Activated T-helper 1 cell treated with anti-CD3 and anti-CD28 coated beads, Interleukin-12 subunit alpha, Interleukin-12 subunit beta, Interleukin-2, Interleukin-4 antibody, amounts not matched to agents 30 ng/mL and 10 ng/mL and 1 ng/mL, durations not matched to agents 14 hours and 24 hours and 36 hours (primary cell): ENCODE measurements at regions of chr17 and their contacts with region 1.

Region 1: DNA sequence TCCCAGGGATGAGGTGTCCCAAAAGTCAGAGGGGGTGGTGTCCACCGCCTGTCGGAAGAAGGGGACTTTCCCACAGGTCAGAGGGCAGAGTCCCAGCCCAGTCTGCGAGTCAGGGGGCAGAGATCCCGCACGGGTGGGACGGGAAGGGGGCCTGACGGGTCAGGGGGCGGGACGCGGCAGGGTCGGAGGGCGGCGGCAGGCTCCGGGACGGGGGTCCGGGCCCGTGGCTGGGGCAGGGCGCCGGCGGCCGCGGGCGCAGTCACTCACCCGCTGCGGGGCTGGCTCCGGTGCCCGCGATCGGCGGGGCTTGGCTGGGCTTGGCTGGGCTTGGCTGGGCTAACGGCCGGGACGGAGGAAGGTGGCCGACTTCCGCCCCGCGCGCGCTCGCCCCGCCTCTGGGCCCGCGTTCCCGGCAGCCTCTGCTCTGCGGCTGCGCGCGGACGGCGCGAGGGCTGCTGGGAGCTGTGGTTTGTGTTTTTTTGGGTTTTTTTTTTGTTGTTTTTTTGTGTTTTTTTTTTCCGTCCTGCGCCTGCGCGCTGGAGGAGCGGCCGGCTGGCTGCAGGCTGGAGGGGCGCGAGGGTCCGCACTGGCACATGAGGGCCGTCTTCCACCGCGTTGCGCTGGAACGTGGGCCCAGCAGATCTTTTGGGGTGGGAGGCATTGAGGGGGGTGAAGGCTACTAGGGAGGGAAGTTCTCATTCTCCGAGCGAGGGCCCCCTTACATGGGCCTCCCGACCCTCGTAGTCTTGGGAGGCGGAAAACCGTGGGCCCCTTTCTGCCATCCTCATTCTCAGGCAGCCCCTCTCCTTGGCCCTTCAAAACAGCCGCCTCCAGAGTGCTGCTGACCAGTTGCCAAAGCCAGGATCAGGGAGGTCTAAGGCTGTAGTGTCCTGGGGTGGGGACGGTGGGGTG is at the start of gene CANT1:
- DNase-seq: peak; percentile 88
- H3K4me3 Mint-ChIP-seq: peak within 1 kb of the TSS; percentile 91
- H3K27ac Mint-ChIP-seq: peak within 1 kb of the TSS; percentile 93
- H3K4me1 Mint-ChIP-seq: peaks cover 52% of the 10 kb centered on the region
- H3K27me3 Mint-ChIP-seq: peaks cover 8% of the 10 kb centered on the region
- total RNA-seq, gene CANT1: 54.7 and 57.3 TPM in 2 replicates

Region 2: GRCh38 chr17:77465358-77466041 is 1544.2 kb before region 1 on chr17:
- intact Hi-C with region 1: loop called (anchors 5 kb)
- DNase-seq: peak; percentile 72
- H3K4me3 Mint-ChIP-seq: peak overlapping the region; percentile 59
- H3K27ac Mint-ChIP-seq: peak overlapping the region; percentile 89
- H3K4me1 Mint-ChIP-seq: peaks cover 77% of the 10 kb centered on the region
- H3K27me3 Mint-ChIP-seq: no peaks in the 10 kb centered on the region

Region 3: DNA sequence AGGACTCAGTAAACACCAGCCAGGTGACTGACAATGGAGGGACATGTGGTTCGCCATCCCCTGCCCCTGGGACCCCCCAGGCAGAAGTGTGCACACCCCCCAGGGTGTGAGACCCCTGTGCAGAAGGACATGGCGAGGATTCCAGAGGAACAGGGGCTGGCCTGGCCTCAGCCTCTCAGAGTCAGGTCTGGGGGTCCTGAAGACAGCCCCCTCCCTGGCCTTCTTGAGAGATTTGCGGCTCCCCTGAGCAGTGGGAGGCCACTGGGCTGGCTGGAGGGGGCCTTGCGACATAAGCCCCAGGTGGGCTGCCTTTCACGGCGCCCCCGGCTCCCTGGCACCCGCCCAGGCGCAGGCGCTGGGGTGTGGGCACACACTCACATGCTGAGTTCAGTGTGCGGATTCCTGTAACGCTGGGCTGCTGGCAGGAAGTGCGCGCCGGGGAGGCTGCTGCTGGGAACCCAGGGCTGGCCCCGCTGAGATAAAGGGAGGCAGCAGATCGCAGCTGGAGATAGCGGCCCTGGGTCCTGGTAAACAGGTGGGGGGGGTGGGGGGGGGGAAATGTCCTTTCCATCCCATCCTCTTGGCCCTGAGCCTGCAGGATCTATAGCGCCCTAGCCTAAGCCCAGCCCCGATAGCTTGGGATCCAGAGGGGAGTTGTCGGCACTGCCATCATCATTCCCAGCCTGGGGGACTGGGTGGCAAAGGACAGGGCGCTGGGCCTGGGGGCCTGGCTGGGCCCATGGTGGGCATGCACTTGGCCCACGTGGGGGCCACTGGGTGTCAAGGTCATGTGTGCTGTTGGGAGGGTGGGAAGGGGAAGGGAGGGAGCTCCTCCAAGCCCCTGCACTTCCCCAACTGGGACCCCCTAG is 751.1 kb before region 1 on chr17:
- intact Hi-C with region 1: loop called (anchors 5 kb)
- DNase-seq: peak; percentile 76
- H3K4me3 Mint-ChIP-seq: peak overlapping the region; percentile 80
- H3K27ac Mint-ChIP-seq: peak overlapping the region; percentile 95
- H3K4me1 Mint-ChIP-seq: peaks cover 75% of the 10 kb centered on the region
- H3K27me3 Mint-ChIP-seq: no peaks in the 10 kb centered on the region

Region 4: GRCh38 chr17:79074650-79075445 is 65.2 kb after region 1 on chr17 and contains the start of gene ENGASE:
- intact Hi-C with region 1: loop called (anchors 5 kb)
- DNase-seq: peak; percentile 93
- H3K4me3 Mint-ChIP-seq: peak within 1 kb of the TSS; percentile 92
- H3K27ac Mint-ChIP-seq: peak within 1 kb of the TSS; percentile 83
- H3K4me1 Mint-ChIP-seq: peaks cover 10% of the 10 kb centered on the region
- H3K27me3 Mint-ChIP-seq: no peaks in the 10 kb centered on the region
- total RNA-seq, gene ENGASE: 46.1 and 46.6 TPM in 2 replicates